ENCODE measurements at regions of chr7 and their contacts with region 1.

Region 1: DNA sequence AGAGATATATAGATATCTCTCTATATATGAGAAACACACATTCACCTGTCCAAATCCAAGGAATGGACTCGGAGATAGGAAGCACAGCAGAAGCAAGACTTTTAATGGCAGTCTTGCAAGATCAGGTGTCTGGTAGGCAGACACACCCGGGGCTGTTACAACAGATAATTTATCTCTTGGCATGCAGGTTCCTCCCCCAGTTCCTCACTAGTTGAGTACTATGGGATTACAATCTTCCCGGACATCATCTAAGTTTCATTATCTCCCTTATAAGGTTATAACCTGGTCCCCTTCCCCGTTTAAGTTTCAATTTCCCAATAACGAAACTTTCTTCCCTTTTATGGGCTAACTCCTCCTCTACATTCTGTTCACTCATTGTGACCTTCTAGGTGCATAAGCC is 399.3 kb downstream of the PPP1R3A start:
- DNase-seq: no peak
- ATAC-seq: no peak
- H3K4me3 ChIP-seq: no peak overlapping the region
- H3K4me3 Mint-ChIP-seq: no peak overlapping the region
- H3K27ac ChIP-seq: no peak overlapping the region
- H3K27ac Mint-ChIP-seq: no peak overlapping the region
- H3K4me1 ChIP-seq: no peaks in the 10 kb centered on the region
- H3K4me1 Mint-ChIP-seq: no peaks in the 10 kb centered on the region
- H3K27me3 ChIP-seq: no peaks in the 10 kb centered on the region
- H3K27me3 Mint-ChIP-seq: no peaks in the 10 kb centered on the region

Region 2: GRCh38 chr7:113582471-113582870 is 63.0 kb after region 1 on chr7:
- CTCF ChIA-PET with region 1: no interaction called
- POLR2A ChIA-PET with region 1: no interaction called
- intact Hi-C with region 1: loop called in 1 of 2 experiments (anchors 10 kb)
- DNase-seq: no peak
- ATAC-seq: no peak
- H3K4me3 ChIP-seq: no peak overlapping the region
- H3K4me3 Mint-ChIP-seq: no peak overlapping the region
- H3K27ac ChIP-seq: no peak overlapping the region
- H3K27ac Mint-ChIP-seq: no peak overlapping the region
- H3K4me1 ChIP-seq: no peaks in the 10 kb centered on the region
- H3K4me1 Mint-ChIP-seq: no peaks in the 10 kb centered on the region
- H3K27me3 ChIP-seq: no peaks in the 10 kb centered on the region
- H3K27me3 Mint-ChIP-seq: no peaks in the 10 kb centered on the region